Activated CD4-positive, alpha-beta T cell treated with anti-CD3 and anti-CD28 coated beads, Interleukin-2, amount 10 ng/mL, durations not matched to agents 24 days and 14 days (primary cell): ENCODE measurements at regions of chr1 and their contacts with region 1.

Region 1: DNA sequence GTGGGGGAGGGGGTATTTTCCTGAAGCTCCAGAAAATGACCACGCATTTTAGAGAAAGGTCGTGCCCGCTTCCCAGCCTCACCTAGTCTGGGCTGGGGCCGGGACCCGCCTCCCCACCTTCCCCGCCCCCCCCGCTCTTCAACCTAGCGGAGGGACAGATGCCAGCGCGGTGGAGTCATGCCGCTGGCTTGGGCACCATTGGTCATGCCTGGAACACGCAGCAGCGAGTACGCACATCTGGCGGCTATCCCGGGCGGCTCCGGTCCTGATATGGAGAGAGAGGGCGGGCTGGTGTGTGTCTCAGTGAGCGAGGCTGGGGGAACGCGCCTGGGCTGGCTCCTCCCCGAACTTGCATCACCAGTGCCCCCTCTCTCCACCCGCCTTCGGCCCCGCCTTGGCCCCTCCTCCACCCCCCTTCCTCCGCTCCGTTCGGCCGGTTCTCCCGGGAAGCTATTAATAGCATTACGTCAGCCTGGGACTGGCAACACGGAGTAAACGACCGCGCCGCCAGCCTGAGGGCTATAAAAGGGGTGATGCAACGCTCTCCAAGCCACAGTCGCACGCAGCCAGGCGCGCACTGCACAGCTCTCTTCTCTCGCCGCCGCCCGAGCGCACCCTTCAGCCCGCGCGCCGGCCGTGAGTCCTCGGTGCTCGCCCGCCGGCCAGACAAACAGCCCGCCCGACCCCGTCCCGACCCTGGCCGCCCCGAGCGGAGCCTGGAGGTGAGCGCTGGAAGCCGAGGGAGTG is at the start of gene ATF3:
- DNase-seq: peak; percentile 97
- H3K4me3 Mint-ChIP-seq: peak within 1 kb of the TSS; percentile 90
- H3K27ac Mint-ChIP-seq: peak within 1 kb of the TSS; percentile 96
- H3K4me1 Mint-ChIP-seq: peaks cover 50% of the 10 kb centered on the region
- H3K27me3 Mint-ChIP-seq: peaks cover 38% of the 10 kb centered on the region
- total RNA-seq, gene ATF3: 21.2 and 29.5 TPM in 2 replicates

Region 2: GRCh38 chr1:211939876-211940468 is 668.4 kb before region 1 on chr1:
- intact Hi-C with region 1: loop called (anchors 5 kb)
- DNase-seq: peak; percentile 79
- H3K4me3 Mint-ChIP-seq: peak overlapping the region; percentile 26
- H3K27ac Mint-ChIP-seq: peak overlapping the region; percentile 34
- H3K4me1 Mint-ChIP-seq: peaks cover 35% of the 10 kb centered on the region
- H3K27me3 Mint-ChIP-seq: no peaks in the 10 kb centered on the region

Region 3: DNA sequence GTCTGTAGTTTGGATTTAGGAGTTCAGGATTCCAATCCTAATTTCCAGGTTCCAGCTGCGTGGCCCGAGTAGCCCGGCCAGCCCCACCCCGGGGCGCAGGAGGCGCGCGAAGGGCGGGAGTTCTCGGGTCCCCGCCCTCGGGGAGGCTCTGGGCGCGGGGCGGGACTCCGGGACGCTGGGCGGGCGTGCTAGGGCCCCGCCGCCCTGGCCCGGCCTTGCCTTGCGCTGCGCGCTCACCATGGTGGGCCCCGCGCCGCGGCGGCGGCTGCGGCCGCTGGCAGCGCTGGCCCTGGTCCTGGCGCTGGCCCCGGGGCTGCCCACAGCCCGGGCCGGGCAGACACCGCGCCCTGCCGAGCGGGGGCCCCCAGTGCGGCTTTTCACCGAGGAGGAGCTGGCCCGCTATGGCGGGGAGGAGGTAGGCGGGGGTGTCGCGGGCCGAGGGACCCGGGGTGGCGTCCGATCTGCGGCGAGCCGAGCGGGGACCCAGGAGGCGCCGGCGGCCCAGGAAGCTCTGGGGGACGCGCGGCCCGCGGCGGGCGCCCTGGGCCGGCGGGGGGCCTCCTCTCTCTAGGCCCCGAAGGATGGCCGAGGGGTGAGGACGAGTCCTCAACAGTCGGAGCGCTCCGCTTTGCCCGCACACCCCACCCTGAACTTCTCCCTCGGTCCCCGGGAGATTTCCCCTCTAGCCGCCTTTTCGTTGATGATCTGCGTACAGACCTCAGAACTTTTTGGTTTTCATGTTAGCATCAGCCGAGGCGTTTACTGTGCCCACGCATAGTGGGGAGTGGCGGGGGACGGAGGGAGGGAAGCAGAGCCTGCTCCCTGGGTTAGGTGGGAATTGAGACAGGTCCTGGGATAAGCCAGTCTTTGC is 175.4 kb before region 1 on chr1 and contains the start of gene NENF:
- intact Hi-C with region 1: loop called (anchors 5 kb)
- DNase-seq: peak; percentile 95
- H3K4me3 Mint-ChIP-seq: peak within 1 kb of the TSS; percentile 82
- H3K27ac Mint-ChIP-seq: peak within 1 kb of the TSS; percentile 76
- H3K4me1 Mint-ChIP-seq: peaks cover 32% of the 10 kb centered on the region
- H3K27me3 Mint-ChIP-seq: peaks cover 2% of the 10 kb centered on the region
- total RNA-seq, gene NENF: 35.1 and 36.1 TPM in 2 replicates

Region 4: DNA sequence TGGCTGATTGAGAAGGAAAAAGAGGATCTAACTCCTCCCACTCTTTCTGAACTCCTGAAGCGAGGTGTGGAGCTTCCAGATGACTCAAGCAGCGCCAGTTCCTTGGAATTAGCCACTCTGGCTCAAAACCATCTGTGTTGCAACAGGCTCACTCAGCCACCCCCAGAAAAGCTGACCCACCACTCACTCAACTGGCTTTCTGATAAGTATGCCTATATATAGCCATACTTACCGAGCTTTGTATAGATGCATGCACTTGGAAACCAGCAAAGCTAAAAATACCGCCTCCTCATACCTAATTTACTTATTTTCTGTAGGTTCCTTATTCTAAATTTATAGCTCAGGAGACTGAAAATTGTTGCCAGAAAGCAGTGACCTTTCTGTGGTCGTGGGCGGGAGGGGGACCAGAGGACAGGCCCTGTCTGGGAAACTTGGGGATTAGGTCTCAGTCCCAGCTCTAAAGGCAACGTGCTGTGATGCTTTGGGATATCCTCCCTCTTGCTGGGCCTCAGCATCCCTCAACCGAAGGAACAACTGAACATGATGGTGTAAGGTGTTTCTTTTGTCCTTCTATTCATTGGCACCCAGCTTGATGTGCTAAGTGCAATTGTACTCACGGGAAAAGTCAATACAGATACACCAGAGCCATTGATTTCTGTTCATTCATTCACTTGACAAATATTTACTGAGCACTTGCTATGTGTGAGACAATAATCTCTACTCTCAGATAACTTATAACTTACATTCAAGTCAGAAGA is 109.9 kb before region 1 on chr1:
- intact Hi-C with region 1: no loop called
- DNase-seq: no peak
- H3K4me3 Mint-ChIP-seq: no peak overlapping the region
- H3K27ac Mint-ChIP-seq: no peak overlapping the region
- H3K4me1 Mint-ChIP-seq: no peaks in the 10 kb centered on the region
- H3K27me3 Mint-ChIP-seq: peaks cover 18% of the 10 kb centered on the region

Region 5: DNA sequence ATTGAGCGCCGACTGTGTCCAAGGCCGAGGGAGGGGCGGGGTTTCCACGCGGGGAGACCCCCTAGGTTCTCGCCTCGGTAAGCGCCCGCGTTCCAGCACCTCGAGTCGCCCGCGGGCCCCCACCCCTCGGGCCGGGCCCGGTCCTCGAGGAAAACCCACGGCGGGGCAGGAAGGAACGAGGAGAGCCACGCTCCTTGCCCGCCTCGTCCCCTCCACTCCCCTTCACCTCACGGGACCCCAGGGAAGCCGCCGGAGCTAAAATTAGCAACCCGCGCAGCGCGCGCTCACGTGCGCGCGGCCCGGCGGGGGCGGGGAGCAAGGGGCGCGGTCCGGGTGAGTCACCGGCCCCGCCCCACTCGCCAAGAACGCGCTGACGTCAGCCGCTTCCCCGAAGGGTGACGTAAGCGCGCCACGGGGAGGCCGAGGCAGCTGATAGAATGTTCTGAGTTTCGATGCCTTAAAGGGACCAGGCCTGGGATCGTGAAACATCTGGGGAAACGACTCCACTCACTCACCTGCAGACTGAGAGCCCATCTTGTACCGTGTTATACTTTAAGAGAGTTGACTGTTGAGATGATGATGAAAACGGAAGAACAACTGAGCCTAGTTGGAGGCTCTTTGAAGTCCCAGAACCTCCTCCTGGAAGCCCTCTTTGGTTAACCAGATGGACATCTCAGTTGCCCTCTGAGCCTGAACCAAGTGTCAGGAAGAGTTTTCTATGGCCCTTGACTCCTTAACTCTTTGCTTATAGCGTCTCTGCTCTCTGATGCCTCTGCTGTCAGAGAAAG is 49.5 kb before region 1 on chr1:
- intact Hi-C with region 1: loop called (anchors 2 kb)
- DNase-seq: peak; percentile 97
- H3K4me3 Mint-ChIP-seq: peak overlapping the region; percentile 72
- H3K27ac Mint-ChIP-seq: peak overlapping the region; percentile 95
- H3K4me1 Mint-ChIP-seq: peaks cover 7% of the 10 kb centered on the region
- H3K27me3 Mint-ChIP-seq: peaks cover 34% of the 10 kb centered on the region

Region 6: DNA sequence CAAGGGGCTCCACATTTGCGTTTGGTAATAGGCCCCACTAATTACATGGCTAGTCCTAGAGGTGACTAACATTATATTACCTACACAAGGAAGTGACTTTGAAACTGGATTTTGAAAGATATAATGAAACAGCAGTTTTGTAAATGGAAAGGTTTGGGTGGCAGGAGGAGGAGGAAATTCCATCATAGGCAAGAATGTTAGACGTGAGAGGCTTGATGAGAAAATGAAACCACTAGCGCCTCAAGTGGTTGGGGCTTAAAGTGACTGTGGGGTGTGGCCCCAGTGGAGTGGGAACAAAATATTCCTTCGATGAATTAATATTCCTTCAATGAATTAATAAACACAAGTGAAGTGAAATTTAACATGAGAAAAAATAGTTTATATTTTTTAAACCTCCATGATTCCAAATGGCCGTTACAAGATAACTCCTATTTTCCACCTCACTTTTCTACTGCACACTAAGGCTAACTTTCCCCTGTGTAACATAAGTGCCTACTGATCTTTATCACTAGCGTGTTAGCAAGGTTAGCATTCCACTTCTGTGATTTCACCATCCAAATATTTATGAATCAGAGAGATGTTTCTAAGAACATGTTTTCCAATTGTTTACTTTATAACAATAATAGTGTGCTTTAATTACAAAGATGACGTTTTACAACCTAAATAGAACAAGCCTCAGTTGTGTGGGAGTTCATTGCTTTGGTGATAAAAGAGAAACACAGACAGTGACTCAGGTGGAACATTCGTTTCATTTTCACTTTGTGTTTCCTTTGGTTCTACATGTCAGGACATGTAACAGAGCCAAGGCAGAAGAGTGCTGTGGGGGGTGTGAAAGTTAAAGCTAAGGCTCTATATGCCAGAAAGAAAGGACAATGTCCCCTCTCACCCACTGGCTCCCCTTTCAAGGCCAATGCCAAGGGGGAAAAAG is 12.3 kb before region 1 on chr1:
- intact Hi-C with region 1: loop called (anchors 1 kb)
- DNase-seq: peak; percentile 90
- H3K4me3 Mint-ChIP-seq: peak overlapping the region; percentile 50
- H3K27ac Mint-ChIP-seq: peak overlapping the region; percentile 94
- H3K4me1 Mint-ChIP-seq: peaks cover 29% of the 10 kb centered on the region
- H3K27me3 Mint-ChIP-seq: peaks cover 22% of the 10 kb centered on the region

Region 7: DNA sequence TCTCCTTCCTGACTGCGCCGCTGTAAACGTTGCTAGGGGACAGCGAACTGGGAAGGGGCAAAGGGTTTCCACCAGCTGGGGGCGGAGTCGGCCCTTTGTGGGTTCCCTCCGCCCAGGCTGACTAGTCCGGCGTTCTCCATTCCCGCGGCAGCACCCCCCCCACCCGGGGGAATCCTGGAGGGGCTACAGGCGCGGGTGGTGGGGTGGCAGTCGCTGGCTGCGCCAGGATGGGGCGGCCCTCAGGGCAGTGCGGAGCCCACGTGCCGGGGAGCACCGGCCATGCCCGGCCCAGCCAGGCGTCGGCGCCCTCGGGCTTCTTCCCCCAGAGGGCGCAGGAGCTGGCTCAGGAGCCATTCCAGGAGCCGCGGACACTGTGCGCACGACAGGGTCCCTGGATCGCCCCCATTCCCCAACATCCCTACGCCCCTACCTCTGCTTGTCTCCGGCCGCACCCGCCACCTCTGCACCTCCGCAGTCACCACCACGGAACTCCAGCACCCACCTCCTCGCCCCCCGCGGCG is 90.8 kb after region 1 on chr1:
- intact Hi-C with region 1: loop called (anchors 5 kb)
- DNase-seq: peak; percentile 86
- H3K4me3 Mint-ChIP-seq: peak overlapping the region; percentile 86
- H3K27ac Mint-ChIP-seq: peak overlapping the region; percentile 87
- H3K4me1 Mint-ChIP-seq: peaks cover 51% of the 10 kb centered on the region
- H3K27me3 Mint-ChIP-seq: peaks cover 15% of the 10 kb centered on the region

Region 8: GRCh38 chr1:212857992-212858460 is 249.6 kb after region 1 on chr1 and contains the start of gene FLVCR1:
- intact Hi-C with region 1: loop called (anchors 5 kb)
- DNase-seq: peak; percentile 99
- H3K4me3 Mint-ChIP-seq: no peak within 1 kb of the TSS
- H3K27ac Mint-ChIP-seq: peak within 1 kb of the TSS; percentile 97
- H3K4me1 Mint-ChIP-seq: peaks cover 19% of the 10 kb centered on the region
- H3K27me3 Mint-ChIP-seq: no peaks in the 10 kb centered on the region
- total RNA-seq, gene FLVCR1: 17.9 and 21.8 TPM in 2 replicates